ENCODE measurements at regions of chr10 and their contacts with region 1.

Region 1: DNA sequence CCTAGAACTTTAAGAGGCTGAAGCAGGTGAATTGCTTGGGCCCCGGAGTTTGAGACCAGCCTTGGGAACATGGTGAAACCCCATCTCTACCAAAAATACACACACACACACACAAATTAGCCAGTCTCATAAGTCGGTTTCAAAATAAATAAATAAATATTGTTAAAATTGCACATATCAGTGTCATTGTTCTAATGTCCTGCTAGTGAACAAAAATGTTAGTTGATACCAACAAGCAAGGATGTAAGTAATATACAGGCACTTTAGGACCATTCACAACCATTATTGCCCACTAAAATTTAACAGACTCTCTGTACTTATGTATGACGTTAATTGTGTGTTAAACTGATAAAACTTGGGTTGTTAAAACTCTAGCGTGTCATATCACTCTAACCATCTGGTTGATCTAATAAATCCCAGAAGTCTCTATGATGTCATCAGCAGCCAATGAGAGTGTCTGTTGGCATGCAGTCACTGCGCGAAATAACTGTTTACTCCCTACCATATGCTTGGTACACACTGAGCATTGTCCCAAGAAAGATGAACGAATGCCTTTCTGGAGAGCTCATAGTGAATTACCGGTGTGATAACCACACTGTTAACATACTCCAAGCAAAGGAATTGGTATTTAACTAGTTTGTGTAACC is 30.4 kb upstream of the OTUD1 start:
- DNase-seq: peak; percentile 95
- ATAC-seq: peak; percentile 88
- H3K4me3 ChIP-seq: no peak overlapping the region
- H3K27ac ChIP-seq: no peak overlapping the region; the same call in 1 of the 2 replicates
- H3K4me1 ChIP-seq: peaks cover 7% of the 10 kb centered on the region
- H3K27me3 ChIP-seq: no peaks in the 10 kb centered on the region
- CTCF ChIP-seq: no peak
- POLR2A ChIP-seq: no peak
- RAD21 ChIP-seq: no peak

Region 2: GRCh38 chr10:23344241-23344841 is 64.1 kb before region 1 on chr10 and contains the start of gene C10orf67:
- CTCF ChIA-PET with region 1: no interaction called
- POLR2A ChIA-PET with region 1: no interaction called
- dilution Hi-C with region 1: no loop called
- in situ Hi-C with region 1: no loop called
- intact Hi-C with region 1: loop called (anchors 2 kb)
- DNase-seq: peak; percentile 39
- ATAC-seq: peak; percentile 60
- H3K4me3 ChIP-seq: peak within 1 kb of the TSS; percentile 54
- H3K27ac ChIP-seq: peak within 1 kb of the TSS; percentile 25
- H3K4me1 ChIP-seq: peaks cover 3% of the 10 kb centered on the region
- H3K27me3 ChIP-seq: no peaks in the 10 kb centered on the region
- CTCF ChIP-seq: no peak
- POLR2A ChIP-seq: no peak
- RAD21 ChIP-seq: no peak
- total RNA-seq, gene C10orf67: 0.18 and 0.28 TPM in 2 replicates

Measured in IMR-90 (cell line).